ENCODE measurements at regions of chr3 and their contacts with region 1.

Region 1: DNA sequence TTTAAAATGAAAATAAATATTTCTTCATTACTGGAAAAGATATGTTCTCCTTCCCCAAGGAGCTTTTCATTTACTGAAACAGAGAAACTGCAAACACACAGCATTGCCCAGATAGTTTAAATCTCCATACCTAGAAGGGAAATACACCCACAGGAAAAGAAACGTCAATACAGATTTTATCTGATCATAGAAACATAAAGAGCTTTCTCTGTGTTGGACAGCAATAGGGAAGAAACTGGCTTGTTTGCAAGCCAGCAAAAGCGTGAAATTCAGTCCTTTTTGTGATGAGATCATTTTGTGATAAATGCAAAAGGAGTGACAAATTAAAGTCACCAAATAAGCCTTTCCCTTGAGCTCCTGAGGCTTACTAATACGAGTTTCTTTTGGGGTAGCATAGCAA is 398.0 kb downstream of the TIGIT start:
- DNase-seq: no peak
- H3K4me3 Mint-ChIP-seq: no peak overlapping the region
- H3K27ac Mint-ChIP-seq: no peak overlapping the region
- H3K4me1 Mint-ChIP-seq: peaks cover 12% of the 10 kb centered on the region
- H3K27me3 Mint-ChIP-seq: peaks cover 5% of the 10 kb centered on the region

Region 2: DNA sequence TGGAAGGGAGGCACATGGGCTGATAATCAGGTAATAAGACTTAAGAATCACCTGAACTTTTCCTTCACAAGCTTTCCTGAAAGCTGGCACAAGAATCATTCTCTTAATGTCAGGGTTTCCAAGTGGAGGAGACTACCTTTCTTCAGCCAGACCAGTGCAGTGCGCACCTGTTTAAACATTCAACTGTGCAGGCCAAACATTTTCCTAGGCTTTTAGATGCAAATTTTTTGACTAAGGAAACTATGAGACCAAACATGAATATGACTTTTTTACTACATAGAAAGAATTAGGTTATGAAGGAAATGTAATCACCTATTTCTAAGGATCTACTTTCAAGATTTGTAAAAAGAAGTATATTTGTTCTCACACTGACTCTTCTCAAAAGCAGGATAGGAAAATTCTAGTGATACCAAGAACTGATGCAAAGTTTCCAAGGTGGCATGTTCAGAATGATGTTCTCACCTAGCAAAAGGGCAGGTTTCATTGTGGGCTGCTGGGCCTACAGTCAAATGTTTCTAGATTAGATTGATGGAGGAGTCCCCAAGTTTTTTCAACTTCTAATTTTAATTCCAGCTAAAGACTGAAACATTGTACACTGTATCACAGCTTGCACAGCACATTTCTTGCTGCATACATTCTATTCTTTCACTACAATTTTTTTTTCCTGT is 59.0 kb before region 1 on chr3:
- intact Hi-C with region 1: loop called (anchors 2 kb)
- DNase-seq: no peak
- H3K4me3 Mint-ChIP-seq: no peak overlapping the region
- H3K27ac Mint-ChIP-seq: no peak overlapping the region
- H3K4me1 Mint-ChIP-seq: peaks cover 5% of the 10 kb centered on the region
- H3K27me3 Mint-ChIP-seq: no peaks in the 10 kb centered on the region

Region 3: DNA sequence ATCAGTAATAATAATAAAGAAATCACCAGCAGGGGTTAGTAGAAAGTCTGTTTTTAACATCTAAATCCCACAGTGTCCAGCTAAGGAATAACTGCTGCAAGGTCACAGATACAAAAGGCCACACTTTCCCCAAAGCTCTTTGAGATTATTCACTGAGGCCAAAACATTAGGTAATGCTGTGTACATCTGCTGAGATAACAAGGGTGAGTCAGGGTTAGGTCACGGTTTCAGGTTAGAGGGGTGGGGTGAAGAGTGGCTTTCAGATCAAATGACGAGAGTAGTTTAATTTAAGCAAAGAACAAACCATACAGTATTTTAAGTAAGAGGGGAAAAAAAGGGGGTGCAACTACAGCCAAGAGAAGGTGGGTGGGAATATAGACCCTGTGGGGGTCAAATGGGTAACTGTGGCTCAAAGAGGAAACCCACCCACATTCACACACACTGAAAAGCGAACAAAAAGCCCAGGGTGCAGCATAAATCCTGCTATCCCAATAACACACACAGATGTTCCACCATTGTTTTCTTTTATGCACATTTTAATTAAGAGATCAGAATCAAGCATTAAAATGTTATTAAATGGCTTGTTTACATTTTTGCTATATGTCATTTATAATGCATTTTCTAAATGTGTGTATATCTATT is 14.8 kb after region 1 on chr3:
- intact Hi-C with region 1: loop called (anchors 2 kb)
- DNase-seq: no peak
- H3K4me3 Mint-ChIP-seq: no peak overlapping the region
- H3K27ac Mint-ChIP-seq: no peak overlapping the region
- H3K4me1 Mint-ChIP-seq: peaks cover 14% of the 10 kb centered on the region
- H3K27me3 Mint-ChIP-seq: no peaks in the 10 kb centered on the region